ENCODE measurements at regions of chr1 and their contacts with region 1.

Region 1: GRCh38 chr1:111197598-111198284 is 2.7 kb downstream of the DENND2D start:
- DNase-seq: peak; percentile 87
- H3K4me3 Mint-ChIP-seq: peak overlapping the region; percentile 98
- H3K27ac Mint-ChIP-seq: peak overlapping the region; percentile 98
- H3K4me1 Mint-ChIP-seq: peaks cover 70% of the 10 kb centered on the region
- H3K27me3 Mint-ChIP-seq: no peaks in the 10 kb centered on the region

Region 2: DNA sequence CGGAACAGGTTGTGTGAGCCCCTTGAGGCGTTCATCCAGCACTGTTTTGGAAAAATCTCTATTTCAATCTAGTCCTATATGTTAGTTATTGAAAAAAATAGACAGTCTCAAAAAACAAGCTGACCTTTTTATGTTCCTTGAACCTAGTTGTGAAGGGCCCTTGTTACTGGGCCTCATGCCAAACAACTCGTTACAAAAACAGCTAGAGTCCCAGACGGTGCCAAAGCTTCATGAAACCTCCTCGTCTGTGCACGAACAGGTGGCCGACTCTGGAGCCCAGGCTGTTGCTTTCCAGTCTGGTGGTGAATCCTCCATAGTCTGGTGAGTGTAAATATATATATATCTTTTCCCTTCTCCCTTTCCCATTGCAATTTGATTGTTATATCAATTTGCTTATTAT is 92.9 kb after region 1 on chr1 and contains the start of gene CHIA:
- intact Hi-C with region 1: no loop called
- DNase-seq: no peak
- H3K4me3 Mint-ChIP-seq: no peak within 1 kb of the TSS
- H3K27ac Mint-ChIP-seq: no peak within 1 kb of the TSS
- H3K4me1 Mint-ChIP-seq: peaks cover 2% of the 10 kb centered on the region
- H3K27me3 Mint-ChIP-seq: peaks cover 2% of the 10 kb centered on the region
- total RNA-seq, gene CHIA: not detected in 2 replicates

Region 3: DNA sequence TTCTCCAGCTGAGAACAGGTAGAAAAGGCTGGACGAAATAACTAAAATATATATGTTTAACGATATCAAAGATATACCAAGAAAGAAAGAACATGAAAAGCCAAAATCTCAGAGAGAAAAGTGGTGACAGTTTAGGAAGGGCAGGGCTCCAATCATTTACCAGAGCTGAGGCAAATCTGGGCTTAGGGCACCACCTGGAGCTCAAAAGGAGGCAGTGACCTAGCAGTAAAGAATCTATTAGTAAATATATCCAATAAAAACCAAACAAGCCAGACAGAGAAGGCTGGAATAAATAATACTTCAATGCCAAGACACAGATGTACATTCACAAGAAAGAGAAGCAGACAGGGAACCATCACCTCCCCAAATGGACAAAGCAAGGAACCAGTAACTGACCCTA is 136.4 kb after region 1 on chr1:
- intact Hi-C with region 1: loop called (anchors 1 kb)
- DNase-seq: peak; percentile 83
- H3K4me3 Mint-ChIP-seq: no peak overlapping the region
- H3K27ac Mint-ChIP-seq: no peak overlapping the region
- H3K4me1 Mint-ChIP-seq: no peaks in the 10 kb centered on the region
- H3K27me3 Mint-ChIP-seq: peaks cover 4% of the 10 kb centered on the region

Region 4: DNA sequence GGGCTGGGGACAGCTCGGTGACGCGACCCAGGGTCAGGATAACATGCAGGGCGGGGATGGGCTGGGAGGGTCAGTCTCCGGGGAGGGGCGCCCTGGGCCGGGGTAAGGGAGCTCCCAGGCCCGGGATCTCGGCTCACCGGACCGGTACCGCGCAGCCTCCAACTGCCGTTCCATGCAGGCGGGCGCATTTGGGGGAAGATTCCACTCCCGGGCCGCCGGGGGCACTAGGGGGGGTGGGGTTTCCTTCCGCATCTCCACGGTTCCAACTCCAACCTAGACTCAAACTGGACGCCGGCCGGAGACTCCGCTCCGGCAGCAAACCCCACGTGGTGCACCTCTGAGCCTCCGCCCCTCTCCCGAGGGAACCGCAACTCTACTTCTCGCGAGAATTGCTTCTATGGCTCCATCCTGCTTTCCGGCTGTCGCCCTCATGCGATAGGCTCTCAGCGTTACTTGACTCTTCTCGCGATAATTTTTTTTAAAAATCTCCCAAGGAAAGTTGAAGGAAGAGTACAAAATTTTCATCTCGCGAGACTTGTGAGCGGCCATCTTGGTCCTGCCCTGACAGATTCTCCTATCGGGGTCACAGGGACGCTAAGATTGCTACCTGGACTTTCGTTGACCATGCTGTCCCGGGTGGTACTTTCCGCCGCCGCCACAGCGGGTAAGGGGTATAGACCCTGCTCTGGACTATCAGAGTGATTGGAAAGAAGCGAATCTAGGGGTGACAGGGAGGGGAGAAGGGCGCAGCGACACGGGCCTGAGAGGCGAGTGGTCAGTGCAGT is 251.4 kb after region 1 on chr1 and contains the starts of genes ATP5PB and WDR77:
- intact Hi-C with region 1: loop called (anchors 5 kb)
- DNase-seq: peak; percentile 98
- H3K4me3 Mint-ChIP-seq: peak within 1 kb of the TSS; percentile 100
- H3K27ac Mint-ChIP-seq: peak within 1 kb of the TSS; percentile 98
- H3K4me1 Mint-ChIP-seq: peaks cover 68% of the 10 kb centered on the region
- H3K27me3 Mint-ChIP-seq: no peaks in the 10 kb centered on the region
- total RNA-seq, gene ATP5PB: 308 and 325 TPM in 2 replicates
- total RNA-seq, gene WDR77: 60.9 and 65.0 TPM in 2 replicates